ENCODE measurements at regions of chr20 and their contacts with region 1.

Region 1: GRCh38 chr20:31849455-31849925 is 4.1 kb upstream of the FOXS1 start:
- DNase-seq: no peak
- H3K4me3 ChIP-seq: 0 out of 8 replicates have a peak overlapping the region, but pooled peaks of 1 of the 4 experiments have one; percentile 6
- H3K27ac ChIP-seq: no peak overlapping the region
- H3K4me1 ChIP-seq: peaks cover 0 to 14% (median 10%) of the 10 kb centered on the region in 4 experiments; a peak in 5 of 7 replicates
- H3K27me3 ChIP-seq: peaks cover 5 to 38% (median 25%) of the 10 kb centered on the region in 4 experiments
- CTCF ChIP-seq: no peak
- EP300 ChIP-seq: no peak
- POLR2A ChIP-seq: no peak
- RAD21 ChIP-seq: no peak; a peak in 1 of 4 replicates

Region 2: GRCh38 chr20:31760519-31761240 is 88.8 kb before region 1 on chr20:
- CTCF ChIA-PET with region 1: no interaction called
- POLR2A ChIA-PET with region 1: no interaction called
- DNase-seq: no peak
- H3K4me3 ChIP-seq: no peak overlapping the region
- H3K27ac ChIP-seq: no peak overlapping the region
- H3K4me1 ChIP-seq: no peaks in the 10 kb centered on the region
- H3K27me3 ChIP-seq: no peaks in the 10 kb centered on the region
- CTCF ChIP-seq: no peak
- EP300 ChIP-seq: no peak
- POLR2A ChIP-seq: no peak
- RAD21 ChIP-seq: no peak

Region 3: DNA sequence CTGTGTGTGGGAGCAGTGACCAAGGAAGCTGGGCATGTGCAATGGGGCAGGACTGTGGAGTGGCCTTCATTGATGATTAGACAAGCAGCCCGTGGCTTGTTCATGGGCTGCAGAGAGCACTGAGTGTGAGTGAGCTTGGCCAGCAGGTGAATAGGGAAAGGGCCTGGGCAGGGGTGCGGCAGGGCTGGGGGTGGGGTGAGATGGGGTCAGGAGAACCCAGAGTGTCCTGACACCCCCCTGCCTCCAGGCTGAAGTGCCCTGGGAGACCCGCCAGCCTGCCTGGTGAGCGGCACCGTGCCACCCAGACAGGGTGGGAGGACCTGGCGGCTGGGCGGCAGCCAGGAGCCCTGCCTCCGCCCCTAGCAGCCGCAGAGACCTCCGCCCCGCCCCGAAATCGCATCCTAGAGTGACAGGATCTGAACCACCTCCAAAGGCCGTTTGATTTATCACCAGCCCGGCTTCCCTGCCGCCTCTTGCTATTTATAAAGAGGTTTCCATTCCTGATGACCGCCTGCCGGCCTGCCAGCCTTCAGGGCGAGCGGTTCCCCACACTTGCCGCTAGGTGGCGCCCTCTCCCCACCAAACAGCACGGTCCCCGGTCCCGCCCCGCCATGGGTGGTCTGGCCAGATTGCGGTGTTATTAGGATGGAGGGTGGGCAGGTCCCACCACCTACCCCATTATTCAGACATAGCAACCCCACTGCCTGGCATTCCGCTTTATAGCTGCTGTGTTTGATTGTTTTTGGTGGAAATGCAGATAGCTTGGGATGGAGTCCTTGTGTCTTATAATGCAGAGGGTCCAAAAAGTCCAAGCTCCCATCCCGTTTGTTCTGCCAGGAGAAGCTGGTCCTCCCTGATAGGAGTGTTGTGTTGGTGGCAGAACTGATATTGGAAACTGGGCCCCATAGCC is 26.8 kb before region 1 on chr20:
- CTCF ChIA-PET with region 1: interaction called, 65 read pairs
- POLR2A ChIA-PET with region 1: interaction called, 3 read pairs
- DNase-seq: peak; percentile 49 to 97
- H3K4me3 ChIP-seq: peak overlapping the region in 2 of 4 experiments; percentile 5 to 35; a peak in 2 of 8 replicates
- H3K27ac ChIP-seq: no peak overlapping the region
- H3K4me1 ChIP-seq: peaks cover 0 to 8% (median 2%) of the 10 kb centered on the region in 4 experiments; a peak in 4 of 7 replicates
- H3K27me3 ChIP-seq: no peaks in the 10 kb centered on the region
- CTCF ChIP-seq: peak; percentile 97 to 100 (median 98)
- EP300 ChIP-seq: peak in 1 of 2 experiments; percentile 83; a peak in 1 of 3 replicates
- POLR2A ChIP-seq: no peak
- RAD21 ChIP-seq: peak; percentile 100

Region 4: DNA sequence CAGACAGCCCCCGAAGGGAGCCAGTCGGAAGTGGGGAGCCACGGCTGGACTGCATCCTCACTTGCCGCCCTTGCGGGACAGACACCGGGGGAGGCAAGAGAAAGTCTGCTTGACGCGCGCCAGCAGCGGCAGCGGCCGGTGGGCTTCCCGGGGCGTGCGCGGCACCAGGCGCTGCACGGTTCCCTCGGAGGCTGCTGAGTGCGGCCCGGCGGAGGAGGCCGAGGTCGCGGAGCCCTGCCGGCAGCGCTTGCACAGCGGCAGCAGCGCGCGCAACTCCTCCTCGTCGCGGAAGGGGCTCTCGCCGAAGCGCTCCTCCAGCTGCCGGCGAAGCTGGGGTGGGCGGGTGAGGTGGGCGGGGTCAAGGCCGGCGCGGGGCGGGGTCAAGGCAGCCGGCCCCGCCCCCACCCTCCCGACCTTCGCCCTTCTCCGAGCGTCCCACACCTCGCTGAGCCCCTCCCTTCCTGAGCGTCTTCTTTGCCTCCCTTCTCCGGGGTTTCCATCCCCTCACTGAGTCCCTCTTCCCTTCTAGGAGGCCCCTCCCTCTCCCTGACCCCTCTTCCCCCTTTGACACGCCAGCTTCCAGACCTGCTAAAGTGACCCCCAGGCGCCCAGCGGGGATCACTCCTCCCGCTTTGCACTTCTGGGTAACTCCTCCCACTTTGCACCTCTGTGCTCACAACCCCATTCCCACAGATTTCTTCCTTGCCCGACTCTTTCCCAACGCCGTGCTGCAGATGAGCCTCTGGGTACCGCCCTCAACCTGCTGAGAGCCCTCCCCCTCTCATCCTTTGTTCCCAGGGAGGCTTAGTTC is 12.1 kb after region 1 on chr20:
- CTCF ChIA-PET with region 1: interaction called, 32 read pairs
- POLR2A ChIA-PET with region 1: interaction called, 6 read pairs
- DNase-seq: peak; percentile 60 to 88
- H3K4me3 ChIP-seq: peak overlapping the region; percentile 60 to 89 (median 84)
- H3K27ac ChIP-seq: peak overlapping the region; percentile 13
- H3K4me1 ChIP-seq: peaks cover 3 to 28% (median 14%) of the 10 kb centered on the region in 4 experiments
- H3K27me3 ChIP-seq: peaks cover 0 to 17% (median 14%) of the 10 kb centered on the region in 4 experiments; a peak in 5 of 7 replicates
- CTCF ChIP-seq: no peak
- EP300 ChIP-seq: no peak
- POLR2A ChIP-seq: peak in 1 of 2 experiments; percentile 21; a peak in 1 of 3 replicates
- RAD21 ChIP-seq: 0 out of 4 replicates have a peak, but pooled peaks of 1 of the 2 experiments have one; percentile 4

Region 5: DNA sequence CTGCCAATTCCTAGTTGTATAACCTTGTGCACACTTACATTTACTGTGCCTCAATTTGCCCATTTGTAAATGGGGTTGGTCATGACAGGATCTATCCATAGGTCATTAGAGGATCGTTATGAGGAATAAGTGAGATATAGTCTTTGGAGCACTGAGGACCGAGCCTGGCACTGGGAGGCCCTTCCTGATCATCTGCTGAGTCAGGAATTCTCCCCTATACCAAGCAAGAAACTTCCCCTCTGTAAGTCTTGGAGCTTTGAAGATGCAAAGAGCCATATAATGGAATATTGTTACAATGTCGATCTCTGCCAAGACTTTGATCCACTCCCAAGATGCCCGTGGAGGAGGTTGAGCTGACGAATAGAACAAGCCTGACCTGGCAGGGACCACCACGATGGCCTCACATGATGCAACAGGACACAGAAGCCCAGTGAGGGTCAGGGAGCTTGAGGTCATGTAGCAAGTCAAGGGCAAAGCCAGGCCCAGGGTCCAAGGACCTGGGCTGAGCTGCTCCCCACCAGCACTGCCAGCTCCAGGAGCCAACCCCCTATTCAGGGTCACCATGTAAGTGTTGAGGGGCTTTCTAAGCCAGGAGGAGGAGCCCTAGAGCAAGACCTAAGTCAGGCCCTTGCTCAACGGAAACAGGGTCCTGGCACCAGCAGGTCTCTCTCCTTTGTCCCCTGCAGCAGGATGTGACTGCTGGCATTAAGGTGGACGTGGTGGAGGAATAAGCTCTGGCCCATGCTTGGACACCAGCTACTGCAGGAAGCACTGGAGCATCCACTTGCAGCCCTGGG is 85.7 kb after region 1 on chr20:
- CTCF ChIA-PET with region 1: interaction called, 48 read pairs
- POLR2A ChIA-PET with region 1: no interaction called
- DNase-seq: peak; percentile 50 to 65
- H3K4me3 ChIP-seq: no peak overlapping the region
- H3K27ac ChIP-seq: no peak overlapping the region
- H3K4me1 ChIP-seq: peaks cover 0 to 8% (median 4%) of the 10 kb centered on the region in 4 experiments; a peak in 6 of 7 replicates
- H3K27me3 ChIP-seq: peaks cover 2 to 12% (median 6%) of the 10 kb centered on the region in 4 experiments; a peak in 4 of 7 replicates
- CTCF ChIP-seq: peak; percentile 67 to 96 (median 77)
- EP300 ChIP-seq: no peak
- POLR2A ChIP-seq: no peak
- RAD21 ChIP-seq: peak; percentile 72 to 82

Region 6: DNA sequence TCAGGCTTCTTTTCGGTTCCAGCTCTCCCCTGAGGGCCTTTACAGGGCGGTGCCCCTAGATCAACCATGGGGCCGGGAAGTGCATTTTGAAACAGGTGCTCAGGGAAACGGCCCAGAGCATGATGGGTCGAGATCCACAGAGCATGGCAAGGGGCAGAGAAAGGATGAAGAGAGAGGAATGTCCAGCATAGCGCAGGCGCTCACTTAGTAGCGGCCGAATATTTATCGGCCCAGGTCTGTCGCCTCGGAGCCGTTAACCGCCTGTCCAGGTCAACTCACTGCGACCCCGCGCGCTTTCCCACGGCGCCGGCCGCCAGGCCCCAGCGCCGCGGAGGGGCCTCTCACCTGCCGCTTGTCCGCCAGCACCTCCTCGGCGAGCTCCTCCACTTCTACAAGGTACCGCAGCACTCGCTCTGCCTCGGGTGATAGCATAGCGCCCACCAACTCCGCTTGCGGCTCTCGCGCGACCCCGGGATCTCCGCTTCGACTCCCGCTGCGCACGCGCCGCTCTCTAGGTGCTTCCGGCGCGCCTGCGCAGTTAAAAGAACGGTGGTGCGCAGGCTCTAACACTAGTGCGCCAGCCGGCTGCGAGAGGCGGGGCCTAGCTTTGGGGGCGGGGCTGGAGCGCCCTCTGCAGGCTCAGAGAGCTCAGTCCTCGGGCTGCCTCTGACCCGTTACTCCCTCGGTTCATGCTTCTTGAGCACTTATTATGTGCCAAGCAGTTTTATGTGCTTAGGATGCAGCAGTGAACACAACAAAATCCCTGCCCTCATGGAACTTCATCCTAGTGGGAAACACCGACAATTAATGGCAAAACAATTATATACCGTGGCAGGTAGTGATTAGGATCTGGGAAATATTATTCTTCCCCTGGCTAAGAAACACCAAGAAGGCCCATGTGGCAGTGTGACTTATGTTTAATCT is 102.3 kb after region 1 on chr20 and contains the start of gene PDRG1:
- CTCF ChIA-PET with region 1: interaction called, 88 read pairs
- POLR2A ChIA-PET with region 1: interaction called, 3 read pairs
- DNase-seq: peak; percentile 94 to 99
- H3K4me3 ChIP-seq: peak within 1 kb of the TSS; percentile 51 to 97 (median 89)
- H3K27ac ChIP-seq: peak within 1 kb of the TSS; percentile 22
- H3K4me1 ChIP-seq: peaks cover 0 to 6% (median 1%) of the 10 kb centered on the region in 4 experiments; a peak in 3 of 7 replicates
- H3K27me3 ChIP-seq: no peaks in the 10 kb centered on the region
- CTCF ChIP-seq: peak; percentile 95 to 99 (median 97)
- EP300 ChIP-seq: no peak
- POLR2A ChIP-seq: peak; percentile 77 to 91
- RAD21 ChIP-seq: peak; percentile 93 to 98
- total RNA-seq, gene PDRG1: 14.2 and 14.5 TPM in 2 replicates

Region 7: GRCh38 chr20:32007787-32008616 is 158.5 kb after region 1 on chr20:
- CTCF ChIA-PET with region 1: interaction called, 11 read pairs
- POLR2A ChIA-PET with region 1: no interaction called
- DNase-seq: peak in 1 of 2 experiments; percentile 62
- H3K4me3 ChIP-seq: no peak overlapping the region
- H3K27ac ChIP-seq: no peak overlapping the region; the same call in 1 of the 2 replicates
- H3K4me1 ChIP-seq: peaks cover 19 to 25% (median 22%) of the 10 kb centered on the region in 4 experiments
- H3K27me3 ChIP-seq: no peaks in the 10 kb centered on the region
- CTCF ChIP-seq: no peak
- EP300 ChIP-seq: no peak
- POLR2A ChIP-seq: no peak
- RAD21 ChIP-seq: no peak

Region 8: GRCh38 chr20:32168184-32168905 is 318.9 kb after region 1 on chr20:
- CTCF ChIA-PET with region 1: no interaction called
- POLR2A ChIA-PET with region 1: no interaction called
- DNase-seq: no peak
- H3K4me3 ChIP-seq: no peak overlapping the region
- H3K27ac ChIP-seq: no peak overlapping the region
- H3K4me1 ChIP-seq: peaks cover 0 to 7% (median 3%) of the 10 kb centered on the region in 4 experiments; a peak in 3 of 7 replicates
- H3K27me3 ChIP-seq: no peaks in the 10 kb centered on the region
- CTCF ChIP-seq: no peak
- EP300 ChIP-seq: no peak
- POLR2A ChIP-seq: no peak
- RAD21 ChIP-seq: no peak